CD4-positive, alpha-beta memory T cell (primary cell): ENCODE measurements at regions of chr4 and their contacts with region 1.

Region 1: GRCh38 chr4:53929955-53930798 is 134.2 kb downstream of the CHIC2 start:
- DNase-seq: peak; percentile 44 to 49 (median 45)
- H3K4me3 ChIP-seq: no peak overlapping the region
- H3K4me3 Mint-ChIP-seq: no peak overlapping the region
- H3K27ac ChIP-seq: no peak overlapping the region
- H3K27ac Mint-ChIP-seq: no peak overlapping the region
- H3K4me1 ChIP-seq: no peaks in the 10 kb centered on the region
- H3K4me1 Mint-ChIP-seq: no peaks in the 10 kb centered on the region
- H3K27me3 ChIP-seq: no peaks in the 10 kb centered on the region
- H3K27me3 Mint-ChIP-seq: peaks cover 0 to 4% of the 10 kb centered on the region in 2 donors

Region 2: GRCh38 chr4:53196882-53197771 is 733.0 kb before region 1 on chr4:
- CTCF ChIA-PET with region 1: interaction called, 4 read pairs
- POLR2A ChIA-PET with region 1: no interaction called
- intact Hi-C with region 1: loop called (anchors 1 kb)
- DNase-seq: peak in 4 of 5 donors; percentile 37 to 55 (median 52)
- H3K4me3 ChIP-seq: no peak overlapping the region
- H3K4me3 Mint-ChIP-seq: no peak overlapping the region
- H3K27ac ChIP-seq: no peak overlapping the region
- H3K27ac Mint-ChIP-seq: no peak overlapping the region
- H3K4me1 ChIP-seq: no peaks in the 10 kb centered on the region
- H3K4me1 Mint-ChIP-seq: peaks cover 0 to 2% (median 0%) of the 10 kb centered on the region in 4 donors
- H3K27me3 ChIP-seq: no peaks in the 10 kb centered on the region
- H3K27me3 Mint-ChIP-seq: no peaks in the 10 kb centered on the region

Region 3: DNA sequence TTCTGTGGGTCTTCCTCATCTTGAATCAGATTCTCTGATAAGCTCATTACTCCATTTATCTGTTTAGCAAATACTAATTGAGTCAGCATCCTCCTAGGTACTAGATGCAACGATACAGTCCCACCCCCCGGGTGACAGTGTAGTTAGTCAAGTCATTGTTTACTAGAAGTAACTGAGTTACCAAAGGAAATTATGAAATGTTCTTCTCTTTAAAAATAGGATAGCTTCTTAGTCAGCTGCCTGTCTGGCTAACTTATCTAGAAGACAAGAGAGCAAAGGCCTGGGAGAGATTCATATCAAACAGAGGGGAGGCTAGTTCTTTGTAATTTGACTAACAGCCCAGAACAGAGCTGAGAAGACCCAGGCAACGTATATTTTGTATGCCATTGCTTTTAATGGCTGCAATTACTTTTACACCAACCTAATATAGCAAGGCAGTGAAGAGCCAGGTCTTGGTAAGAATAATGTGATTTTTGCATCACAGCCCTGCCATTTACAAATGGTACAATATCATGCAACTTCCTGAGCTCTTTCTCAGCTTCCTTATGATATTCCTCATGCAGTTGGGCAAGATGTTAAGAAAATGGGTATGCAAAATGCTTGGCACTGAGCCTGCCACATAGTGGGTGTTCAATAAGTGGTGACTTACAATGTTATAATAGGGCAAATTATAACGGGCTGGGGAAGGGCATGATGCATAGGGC is 15.7 kb before region 1 on chr4:
- CTCF ChIA-PET with region 1: interaction called, 36 read pairs
- POLR2A ChIA-PET with region 1: no interaction called
- intact Hi-C with region 1: no loop called
- DNase-seq: no peak
- H3K4me3 ChIP-seq: no peak overlapping the region
- H3K4me3 Mint-ChIP-seq: no peak overlapping the region
- H3K27ac ChIP-seq: no peak overlapping the region
- H3K27ac Mint-ChIP-seq: peak overlapping the region in 1 of 7 donors; percentile 49
- H3K4me1 ChIP-seq: no peaks in the 10 kb centered on the region
- H3K4me1 Mint-ChIP-seq: no peaks in the 10 kb centered on the region
- H3K27me3 ChIP-seq: no peaks in the 10 kb centered on the region
- H3K27me3 Mint-ChIP-seq: peaks cover 0 to 4% of the 10 kb centered on the region in 2 donors

Region 4: DNA sequence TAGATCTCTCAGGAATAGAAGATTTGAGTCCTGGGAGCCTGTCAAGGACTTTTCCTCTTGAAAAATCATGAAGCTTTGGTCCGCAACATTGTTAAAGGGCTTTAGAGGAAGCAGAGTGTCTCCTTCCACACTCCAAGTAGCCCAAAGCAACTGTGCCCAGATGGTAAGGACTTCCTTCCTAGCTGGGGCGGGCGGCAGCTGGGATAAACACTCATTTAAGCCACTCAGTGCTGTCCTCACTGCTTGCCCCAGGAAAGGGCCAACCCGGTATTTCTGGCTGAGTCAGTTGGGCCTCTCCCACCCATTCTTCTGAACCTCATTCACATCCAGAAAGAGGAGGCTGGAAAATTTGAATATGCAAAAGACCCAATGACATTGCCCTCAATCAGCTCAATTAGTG is 10.1 kb before region 1 on chr4:
- CTCF ChIA-PET with region 1: interaction called, 36 read pairs
- POLR2A ChIA-PET with region 1: no interaction called
- intact Hi-C with region 1: no loop called
- DNase-seq: no peak
- H3K4me3 ChIP-seq: no peak overlapping the region
- H3K4me3 Mint-ChIP-seq: no peak overlapping the region
- H3K27ac ChIP-seq: no peak overlapping the region
- H3K27ac Mint-ChIP-seq: no peak overlapping the region
- H3K4me1 ChIP-seq: no peaks in the 10 kb centered on the region
- H3K4me1 Mint-ChIP-seq: no peaks in the 10 kb centered on the region
- H3K27me3 ChIP-seq: no peaks in the 10 kb centered on the region
- H3K27me3 Mint-ChIP-seq: peaks cover 0 to 2% of the 10 kb centered on the region in 2 donors

Region 5: DNA sequence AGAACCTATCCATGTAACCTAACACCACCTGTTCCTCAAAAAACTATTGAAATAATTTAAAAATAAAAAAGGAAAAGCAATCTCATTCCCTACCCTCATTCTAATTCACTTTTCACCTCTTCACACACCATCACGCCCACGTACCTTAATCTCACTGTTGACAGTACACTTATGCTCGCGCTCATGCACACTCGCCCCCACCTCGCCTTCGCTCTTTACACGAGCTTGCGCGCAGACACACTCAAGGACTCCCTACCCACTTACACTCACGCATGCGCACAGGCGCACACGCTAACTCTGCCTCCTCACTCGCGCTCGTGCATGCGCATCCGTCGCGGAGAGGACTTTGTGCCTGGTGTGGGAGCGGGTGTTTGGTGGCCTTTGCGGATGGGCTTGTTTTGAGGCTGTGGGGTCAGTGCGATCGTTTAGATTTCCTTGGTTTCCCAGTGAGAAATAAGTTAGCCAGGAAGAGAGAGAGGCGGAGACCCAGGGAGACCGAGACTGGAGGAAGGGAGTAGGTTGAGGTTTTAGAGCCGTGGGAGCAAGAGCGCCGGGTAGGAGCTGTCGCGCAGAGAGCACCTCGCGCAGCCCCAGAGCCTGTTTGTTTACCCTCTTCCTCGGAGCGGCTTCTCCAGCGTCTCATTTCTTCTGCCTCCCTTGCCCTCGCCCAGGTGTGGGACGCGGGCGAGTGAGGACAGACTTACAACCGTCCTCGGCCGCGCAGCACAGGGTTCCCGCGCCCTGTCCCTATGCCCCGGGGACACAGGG is 161.6 kb after region 1 on chr4:
- CTCF ChIA-PET with region 1: no interaction called
- POLR2A ChIA-PET with region 1: no interaction called
- intact Hi-C with region 1: no loop called
- DNase-seq: peak; percentile 80 to 84 (median 83)
- H3K4me3 ChIP-seq: peak overlapping the region; percentile 60 to 68
- H3K4me3 Mint-ChIP-seq: peak overlapping the region; percentile 86 to 95 (median 90)
- H3K27ac ChIP-seq: no peak overlapping the region
- H3K27ac Mint-ChIP-seq: peak overlapping the region; percentile 1 to 84 (median 66)
- H3K4me1 ChIP-seq: peaks cover 29% of the 10 kb centered on the region
- H3K4me1 Mint-ChIP-seq: peaks cover 7 to 41% (median 21%) of the 10 kb centered on the region in 4 donors
- H3K27me3 ChIP-seq: peaks cover 46% of the 10 kb centered on the region
- H3K27me3 Mint-ChIP-seq: peaks cover 44 to 46% of the 10 kb centered on the region in 2 donors

Region 6: DNA sequence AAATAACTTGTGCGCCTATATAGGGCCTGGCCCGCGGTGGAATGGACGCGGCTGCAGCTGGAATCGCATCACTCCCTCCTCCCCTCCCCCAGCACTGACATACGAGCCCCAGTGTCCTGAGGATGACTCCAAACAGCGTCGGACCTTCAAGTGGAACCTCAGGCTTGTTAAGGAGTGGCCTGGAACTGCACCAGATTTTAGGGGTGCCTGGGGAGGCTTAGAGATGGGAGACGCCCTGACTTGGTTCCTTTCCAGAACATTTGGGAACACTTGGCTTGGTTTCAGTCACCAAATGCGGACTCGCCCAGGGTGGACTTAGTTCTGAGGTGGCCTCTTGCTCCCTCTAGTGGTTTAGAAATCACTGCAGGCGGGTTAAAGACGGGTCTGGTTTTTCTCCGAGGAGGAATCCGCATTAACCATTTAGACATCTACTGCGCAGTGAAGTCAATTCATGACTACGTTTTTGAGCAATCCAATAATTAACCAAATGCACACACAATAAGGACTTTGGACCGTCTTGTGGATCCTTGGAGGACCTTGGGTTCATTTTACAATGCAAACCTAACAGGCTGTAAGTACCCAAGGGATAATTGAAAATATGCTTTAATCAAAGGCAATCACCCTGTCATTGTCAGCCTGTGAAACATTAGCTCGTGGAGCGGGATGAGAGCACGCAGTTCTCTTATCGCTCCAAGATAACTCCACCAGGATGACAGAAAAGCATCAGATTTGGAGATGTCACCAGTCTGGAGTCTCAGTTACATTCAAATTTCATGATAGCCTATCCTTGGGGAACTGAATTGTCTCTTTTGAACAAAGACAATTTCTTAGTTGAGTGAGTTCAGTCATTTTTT is 287.7 kb after region 1 on chr4:
- CTCF ChIA-PET with region 1: interaction called, 258 read pairs
- POLR2A ChIA-PET with region 1: no interaction called
- intact Hi-C with region 1: loop called (anchors 1 kb)
- DNase-seq: peak in 4 of 5 donors; percentile 53 to 59 (median 54)
- H3K4me3 ChIP-seq: no peak overlapping the region
- H3K4me3 Mint-ChIP-seq: peak overlapping the region in 3 of 8 donors; percentile 39 to 61 (median 53)
- H3K27ac ChIP-seq: no peak overlapping the region
- H3K27ac Mint-ChIP-seq: no peak overlapping the region
- H3K4me1 ChIP-seq: no peaks in the 10 kb centered on the region
- H3K4me1 Mint-ChIP-seq: peaks cover 4 to 7% (median 5%) of the 10 kb centered on the region in 4 donors
- H3K27me3 ChIP-seq: peaks cover 4% of the 10 kb centered on the region
- H3K27me3 Mint-ChIP-seq: peaks cover 22 to 27% of the 10 kb centered on the region in 2 donors

Region 7: DNA sequence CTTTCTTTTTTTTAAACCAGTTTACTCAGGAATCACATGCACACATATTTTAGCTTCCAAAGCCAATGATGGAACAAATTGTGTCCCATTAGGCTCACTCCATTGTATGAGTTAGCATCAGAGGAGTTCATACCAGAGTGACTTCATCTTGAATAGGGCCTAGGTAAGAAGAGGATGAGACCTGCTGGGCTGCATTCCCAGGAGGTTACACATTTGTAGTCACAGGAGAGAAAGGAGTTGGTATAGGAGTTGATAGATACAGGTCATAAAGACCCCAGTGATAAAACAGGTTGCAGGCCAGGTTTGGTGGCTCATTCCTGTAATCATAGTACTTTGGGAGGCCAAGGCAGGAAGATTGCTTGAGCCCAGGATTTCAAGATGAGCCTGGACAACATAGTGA is 308.2 kb after region 1 on chr4:
- CTCF ChIA-PET with region 1: interaction called, 188 read pairs
- POLR2A ChIA-PET with region 1: interaction called, 7 read pairs
- intact Hi-C with region 1: loop called (anchors 1 kb)
- DNase-seq: no peak
- H3K4me3 ChIP-seq: no peak overlapping the region
- H3K4me3 Mint-ChIP-seq: no peak overlapping the region
- H3K27ac ChIP-seq: no peak overlapping the region
- H3K27ac Mint-ChIP-seq: no peak overlapping the region
- H3K4me1 ChIP-seq: peaks cover 9% of the 10 kb centered on the region
- H3K4me1 Mint-ChIP-seq: peaks cover 2 to 9% (median 5%) of the 10 kb centered on the region in 4 donors
- H3K27me3 ChIP-seq: no peaks in the 10 kb centered on the region
- H3K27me3 Mint-ChIP-seq: peaks cover 22 to 38% of the 10 kb centered on the region in 2 donors